Tibial artery (tissue), 4 donors: ENCODE measurements at regions of chr17 and their contacts with region 1.

Region 1: GRCh38 chr17:36133602-36134236 is 30.1 kb downstream of the CCL4 start:
- DNase-seq: no peak
- H3K4me3 ChIP-seq: no peak overlapping the region
- H3K27ac ChIP-seq: no peak overlapping the region
- H3K4me1 ChIP-seq: no peaks in the 10 kb centered on the region
- H3K27me3 ChIP-seq: peaks cover 0 to 15% of the 10 kb centered on the region in 2 donors
- CTCF ChIP-seq: no peak

Region 2: DNA sequence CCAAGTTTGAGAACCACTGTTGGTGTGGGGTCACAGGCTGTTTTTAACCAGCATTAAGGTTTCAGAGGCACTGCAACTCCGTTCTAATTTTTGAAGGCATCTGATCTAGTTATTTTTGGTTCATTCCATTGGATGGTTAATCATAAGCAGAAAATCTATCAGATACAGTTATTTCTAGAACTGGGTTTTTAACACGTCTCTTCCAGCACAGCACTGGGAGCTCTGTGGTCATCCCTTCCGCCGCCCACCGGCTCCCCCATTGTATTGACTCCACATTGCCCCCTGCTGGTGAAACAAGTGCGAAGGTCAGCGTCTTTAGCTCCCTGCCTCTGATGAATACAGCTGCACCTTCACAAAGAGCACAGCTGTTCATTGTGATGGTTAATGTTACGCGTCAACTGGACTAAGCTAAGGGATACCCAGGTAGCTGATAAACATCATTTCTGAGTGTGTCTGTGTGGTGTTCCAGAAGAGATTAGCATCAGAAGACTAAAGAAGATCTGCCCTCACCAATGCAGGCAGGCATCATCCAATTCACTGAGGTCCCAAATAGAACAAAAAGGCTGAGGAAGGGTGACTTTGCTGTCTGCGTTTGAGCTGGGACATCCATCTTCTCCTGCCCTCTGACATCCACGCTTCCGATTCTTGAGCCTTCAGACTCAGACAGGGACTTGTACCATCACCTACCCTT is 61.1 kb before region 1 on chr17:
- intact Hi-C with region 1: loop called (anchors 10 kb)
- DNase-seq: peak in 1 of 2 donors; percentile 35
- H3K4me3 ChIP-seq: no peak overlapping the region
- H3K27ac ChIP-seq: no peak overlapping the region
- H3K4me1 ChIP-seq: no peaks in the 10 kb centered on the region
- H3K27me3 ChIP-seq: no peaks in the 10 kb centered on the region
- CTCF ChIP-seq: peak in 1 of 2 experiments; percentile 16

Region 3: GRCh38 chr17:36089888-36090836 is 43.6 kb before region 1 on chr17 and contains the start of gene CCL3:
- intact Hi-C with region 1: no loop called
- DNase-seq: no peak
- H3K4me3 ChIP-seq: no peak within 1 kb of the TSS
- H3K27ac ChIP-seq: no peak within 1 kb of the TSS
- H3K4me1 ChIP-seq: no peaks in the 10 kb centered on the region
- H3K27me3 ChIP-seq: no peaks in the 10 kb centered on the region
- CTCF ChIP-seq: no peak

Region 4: DNA sequence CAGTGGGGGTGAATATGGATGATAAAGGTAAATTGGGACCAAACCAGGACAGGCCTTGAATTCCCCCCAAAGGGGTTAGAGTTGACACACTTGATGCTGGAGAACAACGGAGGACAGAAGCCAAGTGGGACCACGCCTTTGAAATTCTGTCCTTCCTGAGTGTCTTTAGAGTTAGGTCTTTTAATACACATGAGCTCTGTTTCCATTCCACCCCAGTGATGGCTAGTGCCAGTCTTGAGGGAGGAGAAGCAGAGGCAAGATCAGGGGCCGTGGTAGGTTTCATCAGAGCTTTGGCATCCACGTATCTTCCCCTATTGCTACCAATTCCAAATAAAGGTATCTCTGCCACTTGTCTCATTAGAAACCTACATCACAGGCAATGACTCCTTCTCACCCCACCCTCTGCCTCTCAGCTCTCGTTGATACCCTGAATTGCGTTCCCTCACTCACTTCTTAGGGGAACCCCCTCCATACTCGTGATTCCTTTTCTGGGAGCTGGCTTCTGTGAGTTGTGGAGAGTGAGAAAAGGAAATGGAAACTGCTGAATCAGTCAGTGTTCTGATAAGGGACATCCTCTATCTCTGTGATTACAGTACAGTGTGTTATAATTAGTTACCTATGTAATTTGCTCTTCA is 65.2 kb after region 1 on chr17:
- intact Hi-C with region 1: loop called (anchors 10 kb)
- DNase-seq: no peak
- H3K4me3 ChIP-seq: no peak overlapping the region
- H3K27ac ChIP-seq: no peak overlapping the region
- H3K4me1 ChIP-seq: no peaks in the 10 kb centered on the region
- H3K27me3 ChIP-seq: peaks cover 0 to 9% of the 10 kb centered on the region in 2 donors
- CTCF ChIP-seq: no peak